Calu3 (cell line): ENCODE measurements at regions of chr5 and their contacts with region 1.

Region 1: GRCh38 chr5:110817437-110817836 is 78.6 kb downstream of the SLC25A46 start:
- DNase-seq: no peak
- H3K4me3 Mint-ChIP-seq: peak overlapping the region; percentile 9
- H3K27ac Mint-ChIP-seq: no peak overlapping the region
- H3K4me1 Mint-ChIP-seq: peaks cover 30% of the 10 kb centered on the region
- H3K27me3 Mint-ChIP-seq: no peaks in the 10 kb centered on the region
- CTCF ChIP-seq: no peak

Region 2: DNA sequence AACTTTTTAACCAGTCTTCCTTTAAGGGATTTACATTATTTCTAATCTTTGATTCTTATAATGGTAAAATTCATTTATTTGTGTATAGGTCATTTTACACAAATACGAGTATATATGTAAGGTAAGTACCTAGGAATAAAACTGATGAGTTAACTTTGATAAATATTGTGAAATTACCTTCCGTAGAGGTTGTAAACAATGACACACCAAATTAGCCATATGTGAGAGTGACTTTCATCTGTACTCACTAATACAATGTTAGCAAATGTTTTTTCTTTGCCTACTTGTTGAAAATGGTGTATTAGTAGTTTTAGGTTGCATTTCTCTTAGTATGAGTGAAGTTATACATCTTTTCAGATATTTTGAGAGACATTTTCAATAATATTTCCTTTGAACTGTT is 211.4 kb after region 1 on chr5:
- CTCF ChIA-PET with region 1: interaction called, 11 read pairs
- intact Hi-C with region 1: no loop called
- DNase-seq: no peak
- H3K4me3 Mint-ChIP-seq: no peak overlapping the region
- H3K27ac Mint-ChIP-seq: no peak overlapping the region
- H3K4me1 Mint-ChIP-seq: no peaks in the 10 kb centered on the region
- H3K27me3 Mint-ChIP-seq: peaks cover 13% of the 10 kb centered on the region
- CTCF ChIP-seq: no peak